Activated CD4-positive, alpha-beta memory T cell treated with anti-CD3 and anti-CD28 coated beads, Interleukin-2, amount 10 ng/mL, durations not matched to agents 7 days and 5 days (primary cell): ENCODE measurements at regions of chr16 and their contacts with region 1.

Region 1: GRCh38 chr16:67226804-67227557 is at the start of gene TMEM208:
- DNase-seq: peak; percentile 99
- H3K4me3 Mint-ChIP-seq: peak within 1 kb of the TSS; percentile 100
- H3K27ac Mint-ChIP-seq: peak within 1 kb of the TSS; percentile 97
- H3K4me1 Mint-ChIP-seq: peaks cover 61% of the 10 kb centered on the region
- H3K27me3 Mint-ChIP-seq: no peaks in the 10 kb centered on the region
- total RNA-seq, gene TMEM208: 39.6 to 39.7 TPM

Region 2: GRCh38 chr16:67129422-67129821 is 97.6 kb before region 1 on chr16:
- CTCF ChIA-PET with region 1: no interaction called
- POLR2A ChIA-PET with region 1: no interaction called
- DNase-seq: no peak
- H3K4me3 Mint-ChIP-seq: no peak overlapping the region
- H3K27ac Mint-ChIP-seq: no peak overlapping the region
- H3K4me1 Mint-ChIP-seq: peaks cover 1% of the 10 kb centered on the region
- H3K27me3 Mint-ChIP-seq: no peaks in the 10 kb centered on the region

Region 3: DNA sequence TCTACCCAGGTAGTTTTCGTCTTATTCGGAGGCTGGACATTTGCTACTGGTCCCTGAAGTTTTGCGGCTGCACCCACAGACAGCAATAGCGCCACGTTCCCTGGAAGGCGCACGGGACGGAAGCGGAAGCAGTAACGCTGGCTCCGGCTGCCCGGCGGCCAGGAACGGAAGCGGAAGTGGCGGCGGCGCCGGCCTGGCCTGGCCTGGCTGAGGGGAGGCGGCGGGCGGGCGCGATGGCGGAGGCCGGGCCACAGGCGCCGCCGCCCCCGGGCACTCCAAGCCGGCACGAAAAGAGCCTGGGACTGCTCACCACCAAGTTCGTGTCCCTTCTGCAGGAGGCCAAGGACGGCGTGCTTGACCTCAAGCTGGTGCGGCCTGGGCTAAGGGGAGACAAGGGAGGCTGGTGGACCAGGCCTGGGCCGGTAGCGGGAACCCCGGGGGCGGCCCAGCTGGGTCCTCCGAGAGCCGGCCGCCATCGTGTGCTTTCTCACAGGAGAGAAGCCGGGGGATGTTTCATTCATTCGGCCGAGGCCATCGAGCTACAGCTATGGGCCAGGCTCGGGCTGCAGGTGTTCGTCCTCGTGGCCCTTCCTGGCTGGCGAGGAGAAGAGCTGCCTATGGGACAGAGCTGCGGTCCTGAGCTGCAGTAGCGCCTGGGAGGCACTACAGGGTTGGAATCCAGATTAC is 34.8 kb before region 1 on chr16 and contains the start of gene E2F4:
- CTCF ChIA-PET with region 1: interaction called, 12 read pairs
- POLR2A ChIA-PET with region 1: interaction called, 14 read pairs
- DNase-seq: peak; percentile 91
- H3K4me3 Mint-ChIP-seq: peak within 1 kb of the TSS; percentile 86
- H3K27ac Mint-ChIP-seq: peak within 1 kb of the TSS; percentile 83
- H3K4me1 Mint-ChIP-seq: peaks cover 50% of the 10 kb centered on the region
- H3K27me3 Mint-ChIP-seq: no peaks in the 10 kb centered on the region
- total RNA-seq, gene E2F4: 127 to 131 TPM

Region 4: DNA sequence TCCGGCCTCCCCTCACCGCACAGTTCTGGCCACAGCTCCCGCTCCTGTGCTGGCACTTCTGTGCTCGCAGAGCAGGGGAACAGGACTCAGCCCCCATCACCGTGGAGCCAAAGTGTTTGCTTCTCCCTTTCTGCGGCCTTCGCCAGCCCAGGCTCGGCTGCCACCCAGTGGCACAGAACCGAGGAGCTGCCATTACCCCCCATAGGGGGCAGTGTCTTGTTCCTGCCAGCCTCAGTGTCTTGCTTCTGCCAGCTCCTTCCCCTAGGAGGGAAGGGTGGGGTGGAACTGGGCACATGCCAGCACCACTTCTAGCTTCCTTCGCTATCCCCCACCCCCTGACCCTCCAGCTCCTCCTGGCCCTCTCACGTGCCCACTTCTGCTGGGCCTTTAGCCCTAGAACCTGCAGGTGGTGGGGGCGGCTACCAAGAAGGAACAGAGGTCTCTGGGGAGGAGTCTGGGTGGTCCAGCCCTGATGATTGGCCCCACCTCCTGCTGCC is 28.7 kb before region 1 on chr16:
- CTCF ChIA-PET with region 1: interaction called, 12 read pairs
- POLR2A ChIA-PET with region 1: interaction called, 14 read pairs
- DNase-seq: no peak
- H3K4me3 Mint-ChIP-seq: no peak overlapping the region
- H3K27ac Mint-ChIP-seq: no peak overlapping the region
- H3K4me1 Mint-ChIP-seq: peaks cover 35% of the 10 kb centered on the region
- H3K27me3 Mint-ChIP-seq: no peaks in the 10 kb centered on the region

Region 5: DNA sequence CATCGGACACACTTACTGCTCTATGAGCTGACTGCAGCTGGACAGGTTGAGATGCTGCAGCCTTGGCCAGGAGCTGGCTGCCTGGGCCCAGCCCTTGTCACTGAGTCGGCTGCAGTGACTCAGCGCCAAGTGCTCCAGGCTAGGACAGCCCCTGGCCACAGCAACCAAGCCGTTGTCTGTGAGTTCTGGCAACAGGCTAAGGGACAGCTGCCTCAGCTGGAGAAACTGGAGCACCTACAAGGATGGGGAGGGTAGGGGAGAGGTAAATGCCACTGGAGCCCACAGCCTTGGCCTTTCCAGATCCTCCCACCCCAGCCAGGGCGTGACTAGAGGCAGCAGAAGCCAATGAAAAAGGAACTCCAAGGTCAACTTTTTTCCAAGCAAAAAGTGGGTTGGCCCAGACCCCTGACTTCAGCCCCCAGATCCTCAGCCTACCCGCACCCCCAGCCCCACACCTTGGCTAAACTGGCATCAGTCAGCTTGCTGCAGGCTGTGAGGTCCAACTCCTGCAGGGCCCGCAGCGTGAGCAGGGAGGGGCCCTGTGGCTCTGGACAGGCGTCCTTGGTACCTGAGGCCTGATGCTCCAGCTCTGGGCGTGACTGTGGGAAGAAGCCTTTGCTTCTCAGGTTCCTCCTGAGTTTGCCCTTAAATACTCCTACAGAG is 19.0 kb before region 1 on chr16:
- CTCF ChIA-PET with region 1: interaction called, 4 read pairs
- POLR2A ChIA-PET with region 1: interaction called, 20 read pairs
- DNase-seq: no peak
- H3K4me3 Mint-ChIP-seq: no peak overlapping the region
- H3K27ac Mint-ChIP-seq: no peak overlapping the region
- H3K4me1 Mint-ChIP-seq: no peaks in the 10 kb centered on the region
- H3K27me3 Mint-ChIP-seq: no peaks in the 10 kb centered on the region